Left cardiac atrium (tissue), 4 donors: ENCODE measurements at regions of chr2 and their contacts with region 1.

Region 1: GRCh38 chr2:21175895-21176646 is 52.3 kb downstream of the TDRD15 start:
- DNase-seq: no peak
- ATAC-seq: peak; percentile 44 to 67

Region 2: GRCh38 chr2:21317131-21317530 is 141.1 kb after region 1 on chr2:
- intact Hi-C with region 1: loop called (anchors 1 to 5 kb)
- DNase-seq: peak; percentile 59
- ATAC-seq: peak; percentile 66 to 73

Region 3: GRCh38 chr2:21404827-21405625 is 229.0 kb after region 1 on chr2:
- intact Hi-C with region 1: loop called in 1 of 2 experiments (anchors 10 kb)
- DNase-seq: no peak
- ATAC-seq: no peak